AG04450 (cell line): ENCODE measurements at regions of chr4 and their contacts with region 1.

Region 1: DNA sequence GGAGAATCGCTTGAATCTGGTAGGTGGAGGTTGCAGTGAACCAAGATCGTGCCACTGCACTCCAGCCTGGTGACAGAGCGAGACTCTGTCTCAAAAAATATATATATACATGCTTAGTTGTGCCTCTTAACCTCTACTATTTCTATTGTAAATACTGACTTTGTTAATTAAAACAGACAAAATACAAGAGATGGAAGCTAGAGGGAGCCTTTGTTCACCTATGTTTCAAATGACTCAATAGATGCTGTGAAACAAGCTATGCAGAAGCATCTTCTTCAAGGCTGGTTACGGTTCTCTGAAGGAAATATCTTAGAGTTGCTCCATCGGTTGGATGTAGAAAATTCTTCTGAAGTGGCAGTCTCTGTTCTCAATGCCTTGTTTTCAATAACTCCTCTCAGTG is 6.2 kb downstream of the NCAPG start:
- DNase-seq: peak; percentile 47
- H3K4me3 ChIP-seq: peak overlapping the region; percentile 18; the same call in 1 of the 2 replicates
- H3K27ac ChIP-seq: no peak overlapping the region
- H3K27me3 ChIP-seq: no peaks in the 10 kb centered on the region
- CTCF ChIP-seq: peak; percentile 64

Region 2: GRCh38 chr4:17846266-17846665 is 29.2 kb after region 1 on chr4:
- CTCF ChIA-PET with region 1: interaction called, 12 read pairs
- POLR2A ChIA-PET with region 1: no interaction called
- DNase-seq: peak; percentile 7
- H3K4me3 ChIP-seq: no peak overlapping the region
- H3K27ac ChIP-seq: no peak overlapping the region
- H3K27me3 ChIP-seq: no peaks in the 10 kb centered on the region
- CTCF ChIP-seq: no peak

Region 3: DNA sequence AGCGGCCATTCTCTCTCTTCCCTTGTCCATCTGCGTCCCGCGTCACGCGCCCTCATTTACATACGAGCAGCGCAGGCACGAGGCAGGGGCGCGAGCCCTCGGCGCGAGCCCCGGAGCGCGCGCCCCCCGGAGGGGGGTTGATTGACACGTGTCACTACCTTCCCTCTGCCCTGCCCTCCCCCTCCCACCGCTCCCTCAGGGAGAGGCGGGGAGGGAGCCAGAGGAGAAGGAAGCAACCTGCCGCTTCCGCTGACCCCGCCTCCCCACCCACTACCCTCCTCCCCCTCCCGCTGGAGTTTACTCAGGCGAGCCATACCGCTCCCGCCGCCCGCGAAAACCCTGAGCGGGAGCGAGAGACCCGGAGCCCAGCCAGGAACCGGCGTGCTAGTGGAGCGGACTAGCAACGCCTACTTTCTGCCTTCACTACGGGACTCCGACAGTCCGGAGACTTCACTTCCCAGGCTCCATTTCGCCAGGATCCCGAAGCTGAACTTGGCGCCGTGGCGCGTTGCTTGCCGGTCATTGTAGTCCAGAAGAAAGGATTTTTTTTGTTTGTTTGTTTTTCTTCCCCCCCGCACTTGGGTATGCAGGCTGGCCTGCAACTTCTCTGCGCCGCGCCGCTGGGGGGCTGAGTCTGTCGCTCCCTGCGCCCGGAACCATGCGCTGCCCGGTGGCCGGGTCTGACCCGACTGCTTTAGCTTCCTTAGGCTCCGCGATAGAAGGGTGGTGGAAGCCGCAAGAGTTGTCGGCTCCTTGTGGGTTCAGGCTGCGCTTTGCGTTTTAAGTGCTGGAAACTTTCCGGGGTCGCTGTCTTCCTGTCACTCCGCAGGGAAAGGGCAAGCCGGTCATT is 204.9 kb after region 1 on chr4 and contains the start of gene LCORL:
- CTCF ChIA-PET with region 1: interaction called, 12 read pairs
- POLR2A ChIA-PET with region 1: no interaction called
- DNase-seq: peak; percentile 93
- H3K4me3 ChIP-seq: peak within 1 kb of the TSS; percentile 92
- H3K27ac ChIP-seq: peak within 1 kb of the TSS; percentile 77
- H3K27me3 ChIP-seq: peaks cover 6% of the 10 kb centered on the region
- CTCF ChIP-seq: no peak; the same call in 1 of the 2 replicates
- polyA plus RNA-seq, gene LCORL: 4.3 and 7.2 TPM in 2 replicates

Region 4: DNA sequence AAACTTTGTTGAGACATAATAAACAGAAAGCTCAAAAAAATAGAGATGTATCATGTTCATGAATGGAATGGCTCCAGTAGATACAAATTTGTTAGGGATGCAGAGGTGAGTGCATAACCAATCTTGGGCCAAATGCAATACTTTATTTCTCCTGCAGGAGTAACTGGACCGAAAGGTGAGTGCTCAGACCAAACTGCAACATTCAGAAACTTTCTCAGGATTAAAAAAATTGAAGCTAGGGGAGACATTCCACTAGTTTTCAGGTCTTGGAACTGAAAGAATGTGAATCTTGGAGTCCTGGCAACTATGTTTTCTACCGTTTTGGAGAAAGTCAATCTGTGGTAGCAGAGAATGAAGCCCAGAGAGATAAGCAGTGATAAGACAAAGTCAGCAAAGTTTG is 225.7 kb after region 1 on chr4:
- CTCF ChIA-PET with region 1: no interaction called
- POLR2A ChIA-PET with region 1: no interaction called
- DNase-seq: no peak
- H3K4me3 ChIP-seq: no peak overlapping the region
- H3K27ac ChIP-seq: no peak overlapping the region
- H3K27me3 ChIP-seq: no peaks in the 10 kb centered on the region
- CTCF ChIP-seq: peak; percentile 34; the same call in 1 of the 2 replicates

Region 5: GRCh38 chr4:18209448-18209847 is 392.4 kb after region 1 on chr4:
- CTCF ChIA-PET with region 1: no interaction called
- POLR2A ChIA-PET with region 1: no interaction called
- DNase-seq: no peak
- H3K4me3 ChIP-seq: no peak overlapping the region
- H3K27ac ChIP-seq: no peak overlapping the region
- H3K27me3 ChIP-seq: no peaks in the 10 kb centered on the region
- CTCF ChIP-seq: no peak

Region 6: DNA sequence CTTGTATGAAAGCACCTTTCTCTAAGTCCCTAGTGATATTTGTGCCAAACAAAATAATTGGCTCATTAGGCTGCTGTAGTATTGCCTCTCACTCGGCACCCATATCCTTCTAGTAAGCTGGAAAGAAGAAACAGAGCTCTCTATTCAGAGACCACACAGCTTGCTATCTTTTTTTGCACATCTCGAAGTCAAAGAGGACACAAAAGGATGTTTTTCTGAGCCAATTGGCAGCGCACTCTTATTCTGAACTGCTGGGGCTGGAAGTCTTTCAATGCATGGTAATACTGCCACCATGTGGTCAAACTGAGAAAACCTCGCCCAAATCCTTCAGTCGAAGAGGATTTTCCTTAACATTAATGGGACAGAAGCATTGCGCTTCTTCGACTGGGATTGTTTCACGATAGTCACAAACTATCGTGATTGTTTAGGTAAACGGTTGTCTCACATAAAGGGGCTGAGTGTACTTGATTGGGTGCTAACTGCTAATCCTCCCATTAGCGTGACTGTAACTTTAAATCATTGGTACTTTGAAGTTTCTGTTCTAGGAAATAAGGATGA is 776.5 kb after region 1 on chr4:
- CTCF ChIA-PET with region 1: interaction called, 15 read pairs
- POLR2A ChIA-PET with region 1: no interaction called
- DNase-seq: peak; percentile 49
- H3K4me3 ChIP-seq: peak overlapping the region; percentile 46
- H3K27ac ChIP-seq: no peak overlapping the region
- H3K27me3 ChIP-seq: no peaks in the 10 kb centered on the region
- CTCF ChIP-seq: peak; percentile 87